ENCODE measurements at regions of chr12 and their contacts with region 1.

Region 1: GRCh38 chr12:127677537-127678131 is 589.3 kb upstream of the TMEM132C start:
- DNase-seq: peak; percentile 64
- H3K4me3 Mint-ChIP-seq: no peak overlapping the region
- H3K27ac Mint-ChIP-seq: no peak overlapping the region
- H3K4me1 Mint-ChIP-seq: no peaks in the 10 kb centered on the region
- H3K27me3 Mint-ChIP-seq: no peaks in the 10 kb centered on the region

Region 2: DNA sequence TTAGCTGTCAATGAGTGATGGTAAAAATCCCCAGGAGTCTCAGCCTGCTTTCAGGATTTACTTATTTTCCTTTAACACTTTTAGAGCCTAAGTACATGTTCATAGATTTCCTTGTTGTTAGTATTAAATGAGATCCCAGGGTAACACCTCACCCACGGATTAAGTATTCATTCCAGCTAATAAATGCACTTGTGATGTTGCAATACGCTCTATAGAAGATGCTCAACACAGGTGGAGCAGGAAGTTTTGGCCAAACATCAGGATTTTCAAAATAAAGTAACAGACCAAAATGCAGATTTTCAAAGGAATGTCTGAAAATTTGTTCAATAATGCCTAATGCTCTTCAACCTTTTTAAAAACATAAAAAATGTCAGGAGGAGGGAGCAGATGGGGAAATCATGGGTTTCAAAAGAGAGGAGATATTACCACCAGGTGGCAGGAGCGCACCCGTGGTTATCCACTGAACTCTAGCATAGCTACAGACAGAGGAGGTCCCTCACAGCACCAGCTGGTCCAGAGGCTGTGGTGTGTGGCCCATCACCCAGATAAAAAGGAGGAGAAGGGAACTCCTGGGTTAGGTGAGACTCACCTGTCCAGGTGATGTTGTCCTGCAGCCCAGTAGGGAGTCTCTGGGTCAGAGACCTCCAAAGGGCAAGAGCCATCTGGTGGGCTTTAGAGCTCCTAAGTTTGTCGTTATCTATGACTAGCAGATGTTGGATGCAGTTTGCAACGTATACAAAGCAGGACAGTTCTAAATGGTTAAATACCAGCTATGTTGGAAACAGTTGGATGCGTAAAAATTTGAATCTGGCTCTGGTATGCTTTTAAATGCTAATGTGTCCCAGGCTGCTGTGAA is 569.0 kb before region 1 on chr12:
- CTCF ChIA-PET with region 1: interaction called, 17 read pairs
- POLR2A ChIA-PET with region 1: no interaction called
- intact Hi-C with region 1: loop called (anchors 10 kb)
- DNase-seq: peak; percentile 63
- H3K4me3 Mint-ChIP-seq: no peak overlapping the region
- H3K27ac Mint-ChIP-seq: no peak overlapping the region
- H3K4me1 Mint-ChIP-seq: no peaks in the 10 kb centered on the region
- H3K27me3 Mint-ChIP-seq: peaks cover 32% of the 10 kb centered on the region

Region 3: DNA sequence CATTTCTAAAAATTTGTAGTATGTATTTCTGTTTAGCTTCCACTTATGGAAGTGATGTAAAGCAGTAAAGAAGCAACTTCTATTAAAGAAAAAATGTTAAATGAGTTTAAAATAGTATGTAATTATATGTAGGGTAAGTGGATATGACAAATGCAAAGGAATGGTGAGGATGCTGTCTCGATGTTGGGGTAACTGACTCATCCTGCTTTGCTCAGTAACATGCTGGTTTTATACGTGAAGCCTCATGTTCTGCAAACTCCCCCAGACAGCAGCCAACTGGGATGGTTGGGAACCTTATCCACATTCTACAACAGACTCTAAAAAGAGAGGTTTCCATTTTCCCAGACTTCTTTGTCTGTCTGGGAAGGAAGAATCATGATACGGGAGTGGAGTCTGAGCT is 417.1 kb before region 1 on chr12:
- CTCF ChIA-PET with region 1: no interaction called
- POLR2A ChIA-PET with region 1: no interaction called
- intact Hi-C with region 1: no loop called
- DNase-seq: no peak
- H3K4me3 Mint-ChIP-seq: no peak overlapping the region
- H3K27ac Mint-ChIP-seq: no peak overlapping the region
- H3K4me1 Mint-ChIP-seq: no peaks in the 10 kb centered on the region
- H3K27me3 Mint-ChIP-seq: no peaks in the 10 kb centered on the region

Region 4: GRCh38 chr12:127381048-127381668 is 296.5 kb before region 1 on chr12:
- CTCF ChIA-PET with region 1: interaction called, 11 read pairs
- POLR2A ChIA-PET with region 1: no interaction called
- intact Hi-C with region 1: no loop called
- DNase-seq: peak; percentile 53
- H3K4me3 Mint-ChIP-seq: no peak overlapping the region
- H3K27ac Mint-ChIP-seq: no peak overlapping the region
- H3K4me1 Mint-ChIP-seq: no peaks in the 10 kb centered on the region
- H3K27me3 Mint-ChIP-seq: peaks cover 3% of the 10 kb centered on the region

Region 5: GRCh38 chr12:127559349-127560040 is 118.1 kb before region 1 on chr12:
- CTCF ChIA-PET with region 1: interaction called, 4 read pairs
- POLR2A ChIA-PET with region 1: no interaction called
- intact Hi-C with region 1: loop called (anchors 10 kb)
- DNase-seq: peak; percentile 89
- H3K4me3 Mint-ChIP-seq: no peak overlapping the region
- H3K27ac Mint-ChIP-seq: peak overlapping the region; percentile 85
- H3K4me1 Mint-ChIP-seq: peaks cover 22% of the 10 kb centered on the region
- H3K27me3 Mint-ChIP-seq: no peaks in the 10 kb centered on the region

Region 6: DNA sequence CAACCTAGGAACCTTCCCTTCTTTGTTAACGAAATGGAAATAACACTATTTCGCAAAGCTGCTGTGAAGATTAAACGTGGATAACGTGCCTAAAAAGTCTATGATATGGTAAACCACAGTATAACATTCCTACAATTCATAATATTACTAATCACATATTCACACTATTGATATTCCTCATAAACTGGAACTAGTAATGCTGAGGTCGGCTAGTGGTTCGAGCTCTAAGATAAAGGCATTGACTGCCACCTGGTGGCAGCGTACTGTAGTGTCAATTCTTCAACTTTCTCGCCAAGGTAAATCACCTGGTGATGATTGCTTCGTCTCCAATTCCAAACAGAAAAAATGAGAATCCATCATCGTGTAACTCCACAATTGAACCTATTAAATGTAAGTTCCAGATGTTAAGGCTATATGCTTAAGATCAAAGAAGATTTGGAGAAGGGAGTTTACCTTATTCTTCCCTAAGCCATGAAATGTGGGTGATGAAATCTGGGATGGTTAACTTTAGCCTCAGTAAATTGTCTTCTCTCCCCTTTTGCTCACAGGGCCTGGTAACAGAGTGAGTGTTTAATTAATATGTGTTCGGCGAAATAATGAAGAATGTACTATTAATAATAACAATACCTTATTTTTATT is 391.8 kb after region 1 on chr12:
- CTCF ChIA-PET with region 1: interaction called, 4 read pairs
- POLR2A ChIA-PET with region 1: no interaction called
- intact Hi-C with region 1: loop called (anchors 5 kb)
- DNase-seq: peak; percentile 24
- H3K4me3 Mint-ChIP-seq: no peak overlapping the region
- H3K27ac Mint-ChIP-seq: no peak overlapping the region
- H3K4me1 Mint-ChIP-seq: no peaks in the 10 kb centered on the region
- H3K27me3 Mint-ChIP-seq: no peaks in the 10 kb centered on the region

Measured in activated CD4-positive, alpha-beta memory T cell treated with anti-CD3 and anti-CD28 coated beads for 36 hours (primary cell).